ENCODE measurements at regions of chr15 and their contacts with region 1.

Region 1: DNA sequence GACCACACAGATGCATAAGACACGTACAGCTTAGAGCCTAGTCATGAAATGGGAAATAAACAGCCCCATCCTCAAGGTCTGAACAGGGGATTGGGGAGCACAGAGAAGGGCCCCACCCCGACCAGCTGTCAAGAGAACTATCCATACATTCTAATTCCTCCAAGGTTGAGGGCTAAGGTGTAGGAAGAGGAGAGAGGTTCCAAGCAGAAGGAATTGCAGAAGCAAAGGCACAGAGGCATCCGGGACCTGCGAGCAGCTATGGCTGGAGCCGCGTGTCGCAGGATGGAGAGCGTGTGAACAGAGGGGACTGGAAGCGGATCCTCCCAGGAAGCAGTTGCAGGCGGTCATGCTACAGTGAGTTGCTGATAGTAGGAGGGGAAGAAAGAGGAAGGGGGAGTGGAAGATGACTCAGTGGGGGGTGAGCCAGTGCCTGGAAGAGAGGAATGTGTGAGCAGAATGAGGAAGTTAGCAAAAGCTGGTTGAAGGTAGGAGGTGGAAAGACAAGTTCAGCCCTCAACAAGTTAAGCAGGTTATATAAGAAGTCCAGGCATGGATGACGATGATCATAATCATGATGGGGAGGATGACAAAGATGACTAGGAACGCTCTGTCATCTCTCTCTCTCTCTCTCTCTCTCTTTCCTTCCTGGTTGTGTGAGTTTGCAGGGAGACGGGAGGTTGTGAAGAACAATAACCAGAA is 89.7 kb downstream of the LIPC start:
- DNase-seq: no peak
- H3K4me3 ChIP-seq: no peak overlapping the region
- H3K27ac ChIP-seq: peak overlapping the region in 1 of 4 donors; percentile 28
- H3K4me1 ChIP-seq: peaks cover 10 to 32% (median 27%) of the 10 kb centered on the region in 4 donors
- H3K27me3 ChIP-seq: no peaks in the 10 kb centered on the region
- CTCF ChIP-seq: no peak
- EP300 ChIP-seq: no peak
- POLR2A ChIP-seq: no peak

Region 2: GRCh38 chr15:58469432-58470353 is 51.7 kb before region 1 on chr15:
- intact Hi-C with region 1: loop called (anchors 5 kb)
- DNase-seq: no peak
- H3K4me3 ChIP-seq: no peak overlapping the region
- H3K27ac ChIP-seq: no peak overlapping the region
- H3K4me1 ChIP-seq: peaks cover 2 to 11% (median 9%) of the 10 kb centered on the region in 4 donors
- H3K27me3 ChIP-seq: no peaks in the 10 kb centered on the region
- CTCF ChIP-seq: no peak
- EP300 ChIP-seq: no peak
- POLR2A ChIP-seq: no peak